Activated naive CD4-positive, alpha-beta T cell treated with anti-CD3 and anti-CD28 coated beads for 36 hours (primary cell): ENCODE measurements at regions of chr10 and their contacts with region 1.

Region 1: DNA sequence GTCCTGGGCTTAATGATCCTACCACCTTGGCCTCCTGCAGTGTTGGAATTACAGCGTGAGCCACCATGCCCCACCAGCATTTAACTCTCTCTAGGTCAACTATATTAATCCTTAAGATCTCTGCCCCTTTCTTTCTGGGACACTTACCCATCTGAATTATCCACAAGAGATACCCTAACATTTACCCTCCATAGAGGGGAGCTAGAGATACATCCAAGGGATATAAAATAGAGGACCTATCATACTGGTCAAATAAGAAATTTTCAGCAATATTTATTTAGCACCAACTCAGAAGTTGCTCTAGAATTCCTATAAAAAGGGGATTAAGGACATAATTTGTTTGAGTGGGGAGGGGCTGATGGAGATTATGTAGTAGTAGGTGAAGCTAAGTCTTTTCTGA is 96.5 kb downstream of the OTUD1 start:
- DNase-seq: no peak
- H3K4me3 Mint-ChIP-seq: peak overlapping the region; percentile 14
- H3K27ac Mint-ChIP-seq: peak overlapping the region; percentile 72
- H3K4me1 Mint-ChIP-seq: peaks cover 77% of the 10 kb centered on the region
- H3K27me3 Mint-ChIP-seq: no peaks in the 10 kb centered on the region

Region 2: GRCh38 chr10:23391821-23392220 is 143.6 kb before region 1 on chr10:
- CTCF ChIA-PET with region 1: no interaction called
- intact Hi-C with region 1: no loop called
- DNase-seq: peak; percentile 51
- H3K4me3 Mint-ChIP-seq: no peak overlapping the region
- H3K27ac Mint-ChIP-seq: no peak overlapping the region
- H3K4me1 Mint-ChIP-seq: peaks cover 11% of the 10 kb centered on the region
- H3K27me3 Mint-ChIP-seq: no peaks in the 10 kb centered on the region

Region 3: GRCh38 chr10:23556727-23557440 is 21.5 kb after region 1 on chr10:
- CTCF ChIA-PET with region 1: interaction called, 3 read pairs
- intact Hi-C with region 1: loop called (anchors 1 kb)
- DNase-seq: peak; percentile 31
- H3K4me3 Mint-ChIP-seq: no peak overlapping the region
- H3K27ac Mint-ChIP-seq: peak overlapping the region; percentile 57
- H3K4me1 Mint-ChIP-seq: peaks cover 24% of the 10 kb centered on the region
- H3K27me3 Mint-ChIP-seq: no peaks in the 10 kb centered on the region

Region 4: GRCh38 chr10:23585666-23586065 is 50.3 kb after region 1 on chr10:
- CTCF ChIA-PET with region 1: no interaction called
- intact Hi-C with region 1: no loop called
- DNase-seq: no peak
- H3K4me3 Mint-ChIP-seq: no peak overlapping the region
- H3K27ac Mint-ChIP-seq: no peak overlapping the region
- H3K4me1 Mint-ChIP-seq: no peaks in the 10 kb centered on the region
- H3K27me3 Mint-ChIP-seq: no peaks in the 10 kb centered on the region

Region 5: GRCh38 chr10:23793577-23793976 is 258.2 kb after region 1 on chr10:
- CTCF ChIA-PET with region 1: no interaction called
- intact Hi-C with region 1: no loop called
- DNase-seq: no peak
- H3K4me3 Mint-ChIP-seq: no peak overlapping the region
- H3K27ac Mint-ChIP-seq: no peak overlapping the region
- H3K4me1 Mint-ChIP-seq: no peaks in the 10 kb centered on the region
- H3K27me3 Mint-ChIP-seq: peaks cover under 1% of the 10 kb centered on the region